ENCODE measurements at regions of chr19 and their contacts with region 1.

Region 1: DNA sequence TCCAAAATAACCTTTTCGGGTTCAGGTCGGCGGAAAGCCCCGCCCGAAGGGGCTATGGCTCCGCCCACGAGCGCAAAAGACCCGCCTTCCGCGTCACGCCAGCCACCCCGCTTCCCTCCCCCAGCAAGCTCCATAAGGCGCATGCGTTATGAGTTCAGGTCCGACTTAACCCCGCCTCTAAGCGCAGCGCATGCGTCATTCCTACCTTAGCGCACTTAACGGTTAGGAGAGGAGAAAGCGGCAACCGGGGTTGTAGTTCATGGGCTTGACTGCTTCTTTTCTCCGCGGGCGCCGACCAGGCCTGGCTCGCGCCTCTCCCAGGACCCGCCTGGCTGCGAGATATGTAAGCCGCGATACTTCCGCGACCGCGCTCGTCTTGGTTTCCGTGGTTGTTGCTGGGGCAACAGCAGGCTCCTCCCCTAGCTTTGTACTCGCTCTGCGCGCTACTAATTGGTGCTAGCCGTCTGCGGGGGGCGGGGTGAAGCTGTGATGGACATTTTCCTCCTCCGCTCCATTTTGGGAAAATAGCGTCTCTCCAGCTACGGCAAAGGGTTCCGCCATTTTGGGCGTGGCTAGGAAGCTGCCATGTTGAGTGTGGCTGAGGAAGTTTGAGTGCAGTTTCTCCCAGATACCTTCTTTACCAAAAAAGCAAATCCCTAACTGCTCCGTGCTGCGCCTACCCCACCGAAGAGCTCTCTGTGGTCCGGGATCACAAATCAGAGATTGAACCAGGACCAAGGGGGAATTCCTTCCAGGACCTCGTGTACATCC is at the start of gene B9D2:
- DNase-seq: peak; percentile 93
- ATAC-seq: peak; percentile 92
- H3K4me3 Mint-ChIP-seq: peak within 1 kb of the TSS; percentile 96
- H3K27ac Mint-ChIP-seq: peak within 1 kb of the TSS; percentile 100
- H3K4me1 Mint-ChIP-seq: peaks cover 34% of the 10 kb centered on the region
- H3K27me3 Mint-ChIP-seq: no peaks in the 10 kb centered on the region
- CTCF ChIP-seq: no peak
- total RNA-seq, gene B9D2: 11.7 and 14.2 TPM in 2 replicates

Region 2: GRCh38 chr19:41327576-41328156 is 36.3 kb before region 1 on chr19:
- CTCF ChIA-PET with region 1: interaction called, 3 read pairs
- POLR2A ChIA-PET with region 1: interaction called, 36 read pairs
- intact Hi-C with region 1: no loop called
- DNase-seq: peak; percentile 77
- ATAC-seq: peak; percentile 71
- H3K4me3 Mint-ChIP-seq: peak overlapping the region; percentile 77
- H3K27ac Mint-ChIP-seq: peak overlapping the region; percentile 91
- H3K4me1 Mint-ChIP-seq: peaks cover 70% of the 10 kb centered on the region
- H3K27me3 Mint-ChIP-seq: no peaks in the 10 kb centered on the region
- CTCF ChIP-seq: no peak

Region 3: DNA sequence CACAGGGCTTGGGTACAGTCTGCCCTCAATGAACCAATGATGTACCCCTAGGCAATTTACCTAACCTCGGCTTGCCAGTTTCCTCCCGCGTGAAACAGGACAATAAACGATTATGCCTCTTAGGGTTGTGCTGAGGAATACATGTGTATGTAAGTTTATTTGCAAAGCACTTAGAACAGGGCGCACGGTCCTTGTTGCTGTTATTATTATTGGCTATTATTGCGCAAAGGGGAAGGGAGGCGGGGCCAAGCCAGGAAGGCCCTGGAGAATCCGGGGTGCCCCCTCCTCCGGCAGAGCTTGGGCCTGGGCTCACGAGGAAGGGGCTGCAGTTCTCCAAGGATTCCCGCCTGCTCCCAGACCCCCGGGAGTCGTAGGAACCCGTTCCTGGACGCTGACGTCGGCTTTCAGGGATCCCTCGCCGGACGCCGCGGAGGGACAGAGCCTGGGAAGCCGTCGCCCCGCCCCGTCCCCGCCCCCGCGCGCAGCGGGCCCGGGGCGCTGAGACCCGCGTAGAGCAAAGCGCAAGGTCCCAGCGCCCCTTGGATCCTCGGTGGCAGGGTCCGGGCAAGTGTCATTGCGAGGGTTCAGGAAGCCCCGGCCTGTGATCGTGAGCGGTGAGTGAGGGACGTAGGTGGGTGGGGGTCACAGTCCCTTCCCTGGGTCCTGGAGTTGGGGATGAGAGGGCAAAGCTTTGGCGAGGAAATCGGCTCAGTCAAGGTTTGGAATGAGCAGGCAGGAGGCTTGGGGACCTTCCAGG is 12.5 kb after region 1 on chr19 and contains the start of gene TMEM91:
- CTCF ChIA-PET with region 1: no interaction called
- POLR2A ChIA-PET with region 1: interaction called, 15 read pairs
- intact Hi-C with region 1: no loop called
- DNase-seq: no peak
- ATAC-seq: no peak
- H3K4me3 Mint-ChIP-seq: peak within 1 kb of the TSS; percentile 52
- H3K27ac Mint-ChIP-seq: no peak within 1 kb of the TSS
- H3K4me1 Mint-ChIP-seq: peaks cover 23% of the 10 kb centered on the region
- H3K27me3 Mint-ChIP-seq: no peaks in the 10 kb centered on the region
- CTCF ChIP-seq: no peak
- total RNA-seq, gene TMEM91: 3.7 and 4.6 TPM in 2 replicates

Region 4: DNA sequence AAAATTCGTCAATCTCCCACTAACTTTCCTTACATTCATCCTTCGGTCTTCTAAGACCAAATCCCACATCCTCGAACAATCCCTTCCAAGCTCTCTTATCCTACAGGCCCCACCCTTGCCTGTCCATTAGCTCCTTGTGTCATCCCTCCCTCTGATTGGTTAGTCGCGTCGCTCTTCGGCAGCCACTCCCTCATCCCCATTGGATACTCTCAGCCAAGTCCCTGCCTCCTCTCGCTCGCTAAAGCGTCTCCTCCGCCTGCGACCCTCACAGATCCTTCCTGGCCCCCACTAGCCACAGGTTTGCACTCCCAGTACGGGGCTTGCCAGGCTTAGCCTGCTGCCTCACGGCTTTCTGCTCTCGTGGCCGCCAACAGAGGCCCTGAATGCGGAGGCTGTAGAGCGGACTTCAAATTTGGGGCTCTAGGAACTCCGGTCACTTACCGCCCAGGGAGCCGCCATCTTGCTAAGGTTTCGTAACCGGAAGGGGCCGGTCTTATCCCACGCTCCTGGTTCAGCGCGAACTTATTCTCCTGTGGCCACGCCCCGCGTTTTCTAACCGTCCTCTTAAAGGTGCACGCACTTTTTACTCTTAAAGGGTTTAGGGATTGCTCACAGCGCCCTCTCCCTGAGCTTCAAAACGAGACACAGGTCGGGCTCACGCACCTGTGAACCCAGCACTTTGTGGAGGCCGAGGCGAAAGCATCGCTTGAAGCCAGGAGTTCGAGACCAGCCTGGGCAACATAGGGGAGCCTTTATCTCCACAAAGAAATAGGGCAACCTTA is 75.7 kb after region 1 on chr19 and contains the start of gene DMAC2:
- CTCF ChIA-PET with region 1: interaction called, 3 read pairs
- POLR2A ChIA-PET with region 1: interaction called, 28 read pairs
- intact Hi-C with region 1: loop called (anchors 2 kb)
- DNase-seq: peak; percentile 78
- ATAC-seq: peak; percentile 97
- H3K4me3 Mint-ChIP-seq: no peak within 1 kb of the TSS
- H3K27ac Mint-ChIP-seq: no peak within 1 kb of the TSS
- H3K4me1 Mint-ChIP-seq: peaks cover 7% of the 10 kb centered on the region
- H3K27me3 Mint-ChIP-seq: no peaks in the 10 kb centered on the region
- CTCF ChIP-seq: no peak
- total RNA-seq, gene DMAC2: 38.2 and 45.7 TPM in 2 replicates